AG04450 (cell line): ENCODE measurements at regions of chr13 and their contacts with region 1.

Region 1: GRCh38 chr13:39616087-39616694 is 13.2 kb upstream of the LHFPL6 start:
- DNase-seq: peak; percentile 33
- H3K4me3 ChIP-seq: no peak overlapping the region
- H3K27ac ChIP-seq: no peak overlapping the region
- H3K27me3 ChIP-seq: peaks cover 2% of the 10 kb centered on the region
- CTCF ChIP-seq: peak; percentile 98

Region 2: DNA sequence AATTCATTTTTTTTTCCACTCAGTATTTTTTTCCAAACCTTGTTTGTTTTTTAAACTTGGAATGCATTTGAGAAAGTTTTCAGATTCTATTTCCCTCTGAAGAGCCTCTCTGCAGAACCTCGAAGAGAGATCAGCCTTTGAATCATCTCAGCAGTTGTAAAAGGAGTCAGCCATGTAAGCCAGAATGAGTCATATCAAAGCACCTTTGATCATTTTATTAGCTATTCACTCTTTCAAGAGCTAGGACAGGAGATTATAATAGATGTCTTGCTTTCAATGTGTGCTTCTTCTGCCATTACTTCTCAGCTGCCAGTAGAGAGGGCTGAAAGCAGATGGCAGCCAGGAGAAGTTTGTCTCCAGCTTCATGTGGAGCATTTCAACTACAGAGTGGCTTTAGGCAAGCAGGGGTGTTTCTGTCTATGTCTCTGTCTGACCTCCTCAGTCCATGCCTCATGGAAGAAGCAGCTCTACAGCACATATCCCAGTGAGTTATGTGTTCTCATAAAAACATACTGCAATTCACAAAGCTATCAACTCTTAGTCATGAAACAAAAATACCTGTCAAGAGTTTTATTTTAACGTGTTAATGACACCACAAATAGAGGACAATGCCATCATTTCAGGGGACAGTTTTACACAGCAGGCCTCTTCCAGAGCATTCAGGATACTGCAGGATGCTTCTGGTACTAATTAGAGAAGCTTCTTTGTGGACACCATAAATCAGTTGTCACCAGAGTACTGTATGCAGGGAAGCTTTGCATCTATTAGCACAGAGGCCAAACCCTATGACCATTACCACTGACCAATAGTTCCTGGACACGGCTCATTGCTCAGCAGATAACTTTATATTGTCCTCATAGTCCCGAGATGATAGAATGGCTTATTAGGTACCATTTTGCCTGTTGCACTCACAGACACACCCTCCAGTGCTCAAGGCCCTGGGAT is 483.6 kb before region 1 on chr13:
- CTCF ChIA-PET with region 1: interaction called, 10 read pairs
- POLR2A ChIA-PET with region 1: no interaction called
- DNase-seq: no peak
- H3K4me3 ChIP-seq: no peak overlapping the region
- H3K27ac ChIP-seq: no peak overlapping the region
- H3K27me3 ChIP-seq: no peaks in the 10 kb centered on the region
- CTCF ChIP-seq: no peak

Region 3: GRCh38 chr13:39253774-39254173 is 362.4 kb before region 1 on chr13:
- CTCF ChIA-PET with region 1: interaction called, 13 read pairs
- POLR2A ChIA-PET with region 1: no interaction called
- DNase-seq: peak; percentile 2
- H3K4me3 ChIP-seq: no peak overlapping the region
- H3K27ac ChIP-seq: no peak overlapping the region
- H3K27me3 ChIP-seq: no peaks in the 10 kb centered on the region
- CTCF ChIP-seq: no peak

Region 4: GRCh38 chr13:39311619-39312018 is 304.6 kb before region 1 on chr13:
- CTCF ChIA-PET with region 1: interaction called, 11 read pairs
- POLR2A ChIA-PET with region 1: no interaction called
- DNase-seq: no peak
- H3K4me3 ChIP-seq: no peak overlapping the region
- H3K27ac ChIP-seq: no peak overlapping the region
- H3K27me3 ChIP-seq: no peaks in the 10 kb centered on the region
- CTCF ChIP-seq: no peak

Region 5: GRCh38 chr13:39422845-39423565 is 193.2 kb before region 1 on chr13:
- CTCF ChIA-PET with region 1: interaction called, 57 read pairs
- POLR2A ChIA-PET with region 1: no interaction called
- DNase-seq: no peak
- H3K4me3 ChIP-seq: no peak overlapping the region
- H3K27ac ChIP-seq: no peak overlapping the region
- H3K27me3 ChIP-seq: no peaks in the 10 kb centered on the region
- CTCF ChIP-seq: no peak

Region 6: GRCh38 chr13:39590466-39591036 is 25.6 kb before region 1 on chr13:
- CTCF ChIA-PET with region 1: interaction called, 11 read pairs
- POLR2A ChIA-PET with region 1: no interaction called
- DNase-seq: no peak
- H3K4me3 ChIP-seq: no peak overlapping the region
- H3K27ac ChIP-seq: no peak overlapping the region
- H3K27me3 ChIP-seq: no peaks in the 10 kb centered on the region
- CTCF ChIP-seq: no peak

Region 7: GRCh38 chr13:39918837-39919236 is 302.6 kb after region 1 on chr13:
- CTCF ChIA-PET with region 1: no interaction called
- POLR2A ChIA-PET with region 1: no interaction called
- DNase-seq: no peak
- H3K4me3 ChIP-seq: no peak overlapping the region
- H3K27ac ChIP-seq: no peak overlapping the region
- H3K27me3 ChIP-seq: no peaks in the 10 kb centered on the region
- CTCF ChIP-seq: no peak

Region 8: GRCh38 chr13:41492404-41493260 is 1876.4 kb after region 1 on chr13:
- CTCF ChIA-PET with region 1: no interaction called
- POLR2A ChIA-PET with region 1: no interaction called
- DNase-seq: no peak
- H3K4me3 ChIP-seq: no peak overlapping the region
- H3K27ac ChIP-seq: no peak overlapping the region
- H3K27me3 ChIP-seq: no peaks in the 10 kb centered on the region
- CTCF ChIP-seq: no peak